PC-9 (cell line): ENCODE measurements at regions of chr3 and their contacts with region 1.

Region 1: GRCh38 chr3:106985721-106986120 is 391.5 kb upstream of the CCDC54 start:
- DNase-seq: no peak
- H3K4me3 ChIP-seq: no peak overlapping the region
- H3K27ac ChIP-seq: no peak overlapping the region
- H3K4me1 ChIP-seq: no peaks in the 10 kb centered on the region
- H3K27me3 ChIP-seq: no peaks in the 10 kb centered on the region
- CTCF ChIP-seq: no peak

Region 2: DNA sequence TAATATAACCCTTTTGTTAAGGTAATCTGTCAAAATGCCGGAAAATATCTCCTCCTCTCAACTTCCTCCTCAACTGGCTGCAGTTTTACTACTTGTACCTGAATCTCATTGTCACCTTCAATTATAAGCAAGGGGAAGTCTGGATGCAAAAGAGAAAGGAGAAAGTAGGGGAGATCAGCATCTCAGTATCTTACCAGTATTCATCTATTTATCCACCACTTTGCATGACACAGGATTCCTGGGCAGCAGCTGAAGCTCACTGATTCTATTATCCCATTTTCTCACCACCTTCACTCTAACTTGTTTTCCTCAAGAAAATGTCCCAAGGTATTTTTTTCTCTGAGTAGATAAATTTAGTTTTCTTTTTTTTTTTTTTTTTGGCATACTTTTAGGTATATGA is 676.4 kb before region 1 on chr3:
- CTCF ChIA-PET with region 1: no interaction called
- POLR2A ChIA-PET with region 1: interaction called, 16 read pairs
- intact Hi-C with region 1: no loop called
- DNase-seq: no peak
- H3K4me3 ChIP-seq: no peak overlapping the region
- H3K27ac ChIP-seq: no peak overlapping the region
- H3K4me1 ChIP-seq: no peaks in the 10 kb centered on the region
- H3K27me3 ChIP-seq: no peaks in the 10 kb centered on the region
- CTCF ChIP-seq: no peak

Region 3: DNA sequence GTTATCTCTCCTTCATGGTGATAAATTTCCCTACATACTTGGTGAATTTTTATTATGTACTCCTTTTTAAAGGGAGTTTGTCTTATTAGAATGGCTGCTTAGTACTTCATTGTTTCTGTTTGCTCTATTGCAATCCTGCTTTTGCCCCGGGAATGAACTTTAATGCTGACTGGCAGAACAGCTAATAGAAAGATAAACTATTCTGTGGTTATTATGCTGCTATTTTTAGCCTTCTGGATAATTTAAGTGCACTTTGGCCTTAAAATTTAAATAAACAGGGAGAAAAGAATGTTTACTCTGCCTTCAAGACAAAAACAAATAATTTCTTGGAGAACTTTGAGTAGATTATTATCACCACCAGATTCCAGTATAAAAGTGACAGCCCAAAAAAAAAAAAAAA is 22.3 kb before region 1 on chr3:
- CTCF ChIA-PET with region 1: no interaction called
- POLR2A ChIA-PET with region 1: no interaction called
- intact Hi-C with region 1: no loop called
- DNase-seq: peak in 1 of 2 experiments; percentile 43
- H3K4me3 ChIP-seq: no peak overlapping the region
- H3K27ac ChIP-seq: no peak overlapping the region
- H3K4me1 ChIP-seq: peaks cover 14% of the 10 kb centered on the region
- H3K27me3 ChIP-seq: no peaks in the 10 kb centered on the region
- CTCF ChIP-seq: no peak

Region 4: DNA sequence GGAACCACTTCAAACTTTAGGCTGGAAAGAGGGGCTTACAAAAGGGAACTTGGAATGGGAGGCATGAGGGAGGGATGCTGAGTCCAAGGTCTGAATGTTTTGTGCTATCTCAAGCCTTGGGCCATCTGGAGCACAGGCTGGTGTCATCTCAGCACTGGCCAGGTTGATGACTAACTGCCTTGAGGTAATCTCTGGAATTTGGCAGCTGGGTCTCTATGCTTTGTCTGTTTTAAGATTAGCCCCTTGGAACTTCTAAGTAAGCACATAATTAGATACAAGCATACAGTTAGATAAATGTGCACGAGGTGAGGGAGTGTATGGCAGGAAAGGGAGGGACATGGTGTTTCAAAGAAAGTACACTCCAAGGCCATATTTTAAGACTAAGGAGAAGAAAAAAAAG is 139.2 kb after region 1 on chr3:
- CTCF ChIA-PET with region 1: no interaction called
- POLR2A ChIA-PET with region 1: no interaction called
- intact Hi-C with region 1: no loop called
- DNase-seq: no peak
- H3K4me3 ChIP-seq: no peak overlapping the region
- H3K27ac ChIP-seq: no peak overlapping the region
- H3K4me1 ChIP-seq: no peaks in the 10 kb centered on the region
- H3K27me3 ChIP-seq: no peaks in the 10 kb centered on the region
- CTCF ChIP-seq: no peak

Region 5: GRCh38 chr3:107767897-107768605 is 782.3 kb after region 1 on chr3:
- CTCF ChIA-PET with region 1: no interaction called
- POLR2A ChIA-PET with region 1: no interaction called
- intact Hi-C with region 1: no loop called
- DNase-seq: no peak
- H3K4me3 ChIP-seq: no peak overlapping the region
- H3K27ac ChIP-seq: no peak overlapping the region
- H3K4me1 ChIP-seq: no peaks in the 10 kb centered on the region
- H3K27me3 ChIP-seq: no peaks in the 10 kb centered on the region
- CTCF ChIP-seq: no peak